ENCODE measurements at regions of chr11 and their contacts with region 1.

Region 1: GRCh38 chr11:103055221-103055890 is 36.6 kb downstream of the DCUN1D5 start:
- DNase-seq: no peak
- H3K4me3 ChIP-seq: no peak overlapping the region
- H3K27ac ChIP-seq: no peak overlapping the region
- H3K4me1 ChIP-seq: no peaks in the 10 kb centered on the region
- H3K27me3 ChIP-seq: no peaks in the 10 kb centered on the region
- CTCF ChIP-seq: peak in 2 of 4 experiments; percentile 31 to 60
- EP300 ChIP-seq: no peak
- POLR2A ChIP-seq: no peak

Region 2: GRCh38 chr11:102810945-102811660 is 244.3 kb before region 1 on chr11:
- intact Hi-C with region 1: loop called (anchors 5 kb)
- DNase-seq: no peak
- H3K4me3 ChIP-seq: no peak overlapping the region
- H3K27ac ChIP-seq: no peak overlapping the region
- H3K4me1 ChIP-seq: no peaks in the 10 kb centered on the region
- H3K27me3 ChIP-seq: no peaks in the 10 kb centered on the region
- CTCF ChIP-seq: peak in 1 of 4 experiments; percentile 41
- EP300 ChIP-seq: no peak
- POLR2A ChIP-seq: no peak

Region 3: GRCh38 chr11:102831489-102832440 is 223.6 kb before region 1 on chr11:
- intact Hi-C with region 1: loop called (anchors 5 kb)
- DNase-seq: peak; percentile 70
- H3K4me3 ChIP-seq: peak overlapping the region in 3 of 4 donors; percentile 36 to 45 (median 36)
- H3K27ac ChIP-seq: peak overlapping the region in 3 of 4 donors; percentile 43 to 63 (median 44)
- H3K4me1 ChIP-seq: peaks cover 0 to 20% (median 11%) of the 10 kb centered on the region in 4 donors
- H3K27me3 ChIP-seq: no peaks in the 10 kb centered on the region
- CTCF ChIP-seq: peak in 3 of 4 experiments; percentile 39 to 50 (median 49)
- EP300 ChIP-seq: no peak
- POLR2A ChIP-seq: no peak

Region 4: DNA sequence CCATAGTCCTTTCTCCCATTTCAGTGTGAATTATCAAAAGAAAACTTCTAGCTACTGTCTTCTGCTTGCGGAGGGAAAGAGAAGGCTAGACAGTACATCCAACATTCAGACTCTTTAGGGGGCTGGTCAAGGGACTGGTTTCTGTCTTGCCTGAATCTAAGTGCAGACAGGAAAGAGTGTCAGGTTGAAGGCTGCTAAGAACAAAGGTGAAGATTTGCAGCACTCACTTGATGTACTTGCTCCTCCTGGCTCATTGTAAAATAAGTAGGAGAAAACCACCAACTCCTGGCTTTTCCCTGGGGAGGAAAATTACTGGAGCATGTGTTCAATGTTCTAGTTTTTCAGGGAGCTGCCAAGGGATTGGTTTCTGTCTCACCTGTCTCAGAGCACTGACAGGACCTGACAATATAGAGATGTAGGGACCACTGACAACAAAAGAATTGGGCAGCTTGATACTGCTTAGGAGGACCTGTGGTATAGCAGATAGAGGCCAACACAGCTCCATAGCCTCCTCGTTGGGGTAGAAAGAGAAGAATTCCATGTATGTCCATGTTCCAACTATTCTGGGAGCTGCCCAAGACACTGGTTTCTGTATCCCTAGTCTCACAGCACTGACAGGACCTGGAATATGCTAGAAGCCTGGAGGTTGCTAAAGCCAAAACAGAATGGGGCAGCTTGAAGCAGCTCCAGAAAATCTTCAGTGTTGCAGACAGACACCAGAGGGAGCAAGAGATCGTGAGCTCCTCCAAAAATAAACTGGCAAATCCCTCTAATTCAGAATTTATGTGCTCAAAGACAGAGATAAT is 140.9 kb before region 1 on chr11:
- intact Hi-C with region 1: loop called (anchors 5 kb)
- DNase-seq: peak; percentile 66
- H3K4me3 ChIP-seq: no peak overlapping the region
- H3K27ac ChIP-seq: peak overlapping the region in 3 of 4 donors; percentile 64 to 75 (median 75)
- H3K4me1 ChIP-seq: peaks cover 0 to 37% (median 11%) of the 10 kb centered on the region in 4 donors
- H3K27me3 ChIP-seq: no peaks in the 10 kb centered on the region
- CTCF ChIP-seq: peak in 3 of 4 experiments; percentile 54 to 62 (median 62)
- EP300 ChIP-seq: peak in 1 of 4 donors; percentile 24
- POLR2A ChIP-seq: no peak

Measured in sigmoid colon (tissue), 7 donors.